ENCODE measurements at regions of chr17 and their contacts with region 1.

Region 1: DNA sequence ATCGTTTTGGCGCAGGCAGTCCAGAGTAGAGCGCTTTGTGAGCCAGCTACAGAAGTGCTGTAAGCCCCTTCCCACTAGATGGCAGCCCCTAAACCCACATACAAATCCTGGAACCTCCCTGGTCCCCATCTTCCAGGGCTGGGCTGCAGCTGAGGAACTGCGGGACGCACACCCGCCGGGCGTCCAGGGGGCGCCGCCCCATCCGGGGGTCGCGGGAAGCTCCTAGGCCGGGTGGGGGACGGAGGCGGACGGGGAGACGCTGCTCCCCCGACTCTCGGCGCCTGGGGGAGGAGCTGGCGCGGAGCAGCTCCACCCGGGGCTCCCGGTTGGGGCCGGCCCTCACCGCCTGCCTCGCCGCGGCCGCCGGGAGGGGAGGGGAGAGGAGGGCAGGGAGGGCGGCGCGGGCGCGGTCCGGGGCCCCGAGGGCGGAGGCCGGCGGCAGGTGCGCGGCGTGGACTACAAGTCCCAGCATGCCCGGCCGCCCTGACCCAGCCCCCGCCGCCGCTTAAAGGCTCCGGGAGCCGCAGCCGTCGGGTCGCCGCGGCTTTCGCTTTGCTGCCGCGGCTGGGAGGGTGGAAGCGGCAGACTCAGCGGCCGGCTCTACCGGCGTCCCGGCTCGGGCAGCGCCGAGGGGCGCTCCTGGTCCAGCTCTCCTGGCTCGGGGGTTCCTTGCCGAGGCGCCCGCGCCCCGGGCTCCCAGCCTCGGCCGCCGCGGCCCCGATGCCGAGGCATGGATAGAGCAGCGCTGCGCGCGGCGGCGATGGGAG is at the start of gene KSR1:
- DNase-seq: peak; percentile 91 to 94 (median 92)
- ATAC-seq: peak; percentile 92
- H3K4me3 ChIP-seq: peak within 1 kb of the TSS; percentile 88
- H3K27ac ChIP-seq: peak within 1 kb of the TSS; percentile 58; the same call in 2 of the 3 replicates
- H3K4me1 ChIP-seq: peaks cover 37 to 41% of the 10 kb centered on the region in 2 experiments; a peak in 4 of 5 replicates
- H3K27me3 ChIP-seq: no peaks in the 10 kb centered on the region
- CTCF ChIP-seq: peak; percentile 54 to 64 (median 62)
- EP300 ChIP-seq: no peak
- POLR2A ChIP-seq: peak; percentile 64
- RAD21 ChIP-seq: peak; percentile 56 to 78
- polyA plus RNA-seq, gene KSR1: 1.4 TPM

Region 2: GRCh38 chr17:27353461-27354050 is 102.5 kb before region 1 on chr17:
- CTCF ChIA-PET with region 1: no interaction called
- POLR2A ChIA-PET with region 1: interaction called, 3 read pairs
- in situ Hi-C with region 1: no loop called
- intact Hi-C with region 1: loop called (anchors 5 kb)
- DNase-seq: peak; percentile 97
- ATAC-seq: peak; percentile 92
- H3K4me3 ChIP-seq: peak overlapping the region; percentile 79
- H3K27ac ChIP-seq: peak overlapping the region; percentile 98
- H3K4me1 ChIP-seq: peaks cover 33 to 35% of the 10 kb centered on the region in 2 experiments
- H3K27me3 ChIP-seq: no peaks in the 10 kb centered on the region
- CTCF ChIP-seq: peak; percentile 82 to 97 (median 93)
- EP300 ChIP-seq: peak; percentile 81
- POLR2A ChIP-seq: peak; percentile 91
- RAD21 ChIP-seq: peak; percentile 97

Region 3: GRCh38 chr17:27430383-27430840 is 25.7 kb before region 1 on chr17:
- CTCF ChIA-PET with region 1: no interaction called
- POLR2A ChIA-PET with region 1: no interaction called
- in situ Hi-C with region 1: no loop called
- intact Hi-C with region 1: no loop called
- DNase-seq: no peak
- ATAC-seq: no peak
- H3K4me3 ChIP-seq: no peak overlapping the region
- H3K27ac ChIP-seq: no peak overlapping the region
- H3K4me1 ChIP-seq: peaks cover 0 to 31% of the 10 kb centered on the region in 2 experiments; a peak in 2 of 5 replicates
- H3K27me3 ChIP-seq: no peaks in the 10 kb centered on the region
- CTCF ChIP-seq: no peak
- EP300 ChIP-seq: no peak
- POLR2A ChIP-seq: no peak
- RAD21 ChIP-seq: no peak

Region 4: DNA sequence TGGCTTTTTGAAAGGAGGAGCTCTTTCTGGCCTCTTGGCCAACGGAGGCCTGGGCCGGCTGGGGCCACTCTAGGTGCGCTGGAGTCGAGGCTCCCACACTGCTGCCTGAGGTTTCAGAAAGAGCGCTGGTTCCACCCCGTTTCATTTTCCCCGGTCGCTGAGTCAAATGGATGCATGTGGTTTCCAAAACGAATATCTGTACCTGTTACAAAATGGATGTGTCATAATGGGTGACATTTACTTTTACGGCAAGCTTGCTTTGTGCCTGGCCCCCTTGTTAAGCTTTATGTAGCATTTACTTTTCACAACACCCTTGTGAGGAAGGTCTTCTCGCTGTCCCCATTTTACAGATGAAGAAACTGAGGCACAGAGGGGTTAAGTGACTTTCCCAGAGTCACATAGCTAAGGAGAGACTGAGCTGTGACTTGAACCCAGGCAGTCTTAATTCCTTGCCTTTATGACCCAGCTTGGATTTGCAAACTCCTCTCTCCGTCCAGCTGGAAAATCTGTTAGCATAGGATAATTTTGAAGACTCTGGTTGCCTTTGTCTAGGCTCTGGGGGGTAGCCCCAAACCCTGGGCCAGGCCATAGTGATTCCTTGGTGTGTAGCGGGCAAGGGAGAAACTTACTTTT is 10.8 kb after region 1 on chr17:
- CTCF ChIA-PET with region 1: no interaction called
- POLR2A ChIA-PET with region 1: interaction called, 40 read pairs
- in situ Hi-C with region 1: no loop called
- intact Hi-C with region 1: no loop called
- DNase-seq: peak in 2 of 4 experiments; percentile 36 to 60
- ATAC-seq: peak; percentile 60
- H3K4me3 ChIP-seq: no peak overlapping the region
- H3K27ac ChIP-seq: peak overlapping the region; percentile 66
- H3K4me1 ChIP-seq: peaks cover 54 to 71% of the 10 kb centered on the region in 2 experiments
- H3K27me3 ChIP-seq: no peaks in the 10 kb centered on the region
- CTCF ChIP-seq: no peak
- EP300 ChIP-seq: no peak
- POLR2A ChIP-seq: no peak
- RAD21 ChIP-seq: no peak

Region 5: DNA sequence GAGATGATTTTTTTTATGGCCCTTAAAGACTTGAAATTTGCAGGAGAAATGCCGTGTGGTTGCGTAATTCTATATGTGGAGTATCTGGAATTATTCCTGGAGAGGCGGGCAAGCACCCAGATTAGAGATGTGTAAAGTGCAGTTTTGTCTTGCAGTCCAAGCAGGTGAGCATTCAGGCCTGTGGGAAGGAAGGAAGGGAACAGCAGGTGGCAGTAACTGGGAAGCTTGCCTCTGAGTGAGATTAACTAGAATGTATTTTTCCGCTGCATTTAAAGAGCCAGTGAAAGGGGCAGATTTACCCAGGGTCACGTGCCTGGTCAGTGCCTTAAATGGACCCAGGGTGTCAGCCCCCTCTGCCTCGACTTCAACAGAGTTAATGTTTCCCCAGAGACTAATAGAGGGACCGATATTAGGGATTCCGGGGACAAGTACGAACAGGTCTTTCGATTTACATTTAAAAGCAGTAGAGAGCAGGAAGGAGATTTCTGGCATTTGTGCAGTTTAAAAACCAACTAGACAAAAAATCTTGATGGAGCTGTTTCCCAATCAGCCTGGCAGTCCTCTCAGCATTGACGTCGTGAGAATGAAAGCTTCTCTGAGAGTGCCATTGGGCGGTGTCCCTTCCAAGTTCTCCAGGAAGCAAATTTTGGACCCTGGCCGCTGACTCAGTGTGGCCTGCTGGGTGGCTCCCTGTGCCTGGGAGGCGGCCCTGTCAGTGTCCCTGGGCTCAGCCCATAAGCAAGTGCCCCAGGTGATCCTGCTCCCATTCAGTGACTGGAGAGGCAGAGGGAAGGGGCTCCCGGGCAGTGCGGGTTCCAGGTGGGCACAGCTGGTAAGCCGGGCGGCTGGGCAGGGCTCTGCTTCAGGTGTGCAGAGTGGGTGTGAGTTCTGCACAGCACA is 38.3 kb after region 1 on chr17:
- CTCF ChIA-PET with region 1: no interaction called
- POLR2A ChIA-PET with region 1: interaction called, 5 read pairs
- in situ Hi-C with region 1: no loop called
- intact Hi-C with region 1: loop called (anchors 2 kb)
- DNase-seq: no peak
- ATAC-seq: no peak
- H3K4me3 ChIP-seq: no peak overlapping the region
- H3K27ac ChIP-seq: no peak overlapping the region
- H3K4me1 ChIP-seq: peaks cover 35 to 61% of the 10 kb centered on the region in 2 experiments
- H3K27me3 ChIP-seq: no peaks in the 10 kb centered on the region
- CTCF ChIP-seq: peak; percentile 24 to 43 (median 40); a peak in 2 of 6 replicates
- EP300 ChIP-seq: no peak
- POLR2A ChIP-seq: no peak
- RAD21 ChIP-seq: peak in 1 of 2 experiments; percentile 50; a peak in 2 of 4 replicates